Esophagus muscularis mucosa (tissue), 4 donors: ENCODE measurements at regions of chr3 and their contacts with region 1.

Region 1: GRCh38 chr3:15205934-15206661 is at the start of gene CAPN7:
- DNase-seq: peak; percentile 96
- H3K4me3 ChIP-seq: peak within 1 kb of the TSS; percentile 87 to 98 (median 90)
- H3K27ac ChIP-seq: peak within 1 kb of the TSS; percentile 96 to 99 (median 98)
- H3K4me1 ChIP-seq: peaks cover 24 to 52% (median 40%) of the 10 kb centered on the region in 4 donors
- H3K27me3 ChIP-seq: no peaks in the 10 kb centered on the region
- CTCF ChIP-seq: peak; percentile 44 to 60 (median 47)
- EP300 ChIP-seq: no peak
- POLR2A ChIP-seq: peak; percentile 65
- total RNA-seq, gene CAPN7: 33.0 to 52.0 (median 43.3) TPM

Region 2: GRCh38 chr3:15108082-15108545 is 98.0 kb before region 1 on chr3:
- intact Hi-C with region 1: loop called (anchors 2 kb)
- DNase-seq: no peak
- H3K4me3 ChIP-seq: no peak overlapping the region
- H3K27ac ChIP-seq: no peak overlapping the region
- H3K4me1 ChIP-seq: peaks cover 9 to 13% (median 11%) of the 10 kb centered on the region in 4 donors
- H3K27me3 ChIP-seq: no peaks in the 10 kb centered on the region
- CTCF ChIP-seq: peak; percentile 80 to 92 (median 82)
- EP300 ChIP-seq: no peak
- POLR2A ChIP-seq: no peak

Region 3: DNA sequence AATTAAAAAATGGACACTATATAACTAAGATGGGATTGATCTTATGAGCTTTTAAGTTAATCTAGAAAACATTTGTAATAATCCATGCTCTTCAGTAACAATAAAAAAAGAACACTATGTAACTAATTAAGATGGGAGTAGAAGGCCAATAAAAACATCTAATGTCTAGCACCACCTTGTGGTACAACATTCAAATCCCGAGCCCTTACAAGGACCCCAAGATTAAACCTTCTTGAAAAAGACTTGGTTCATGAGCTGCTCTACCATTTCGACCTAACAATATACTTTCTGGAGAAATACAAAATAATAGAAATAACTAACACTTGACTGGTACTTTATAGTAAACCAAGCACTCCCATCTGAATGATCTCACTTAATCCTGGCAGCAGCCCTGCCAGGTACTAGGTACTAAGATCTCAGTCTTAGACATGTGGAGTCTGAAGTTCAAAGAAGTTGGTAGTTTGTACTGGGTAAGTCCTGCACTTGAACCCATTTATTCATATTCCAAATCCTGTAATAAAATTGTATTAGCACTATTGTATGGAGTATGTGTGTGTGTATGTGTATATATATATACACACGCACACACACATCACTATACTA is 199.5 kb after region 1 on chr3:
- intact Hi-C with region 1: loop called (anchors 5 kb)
- DNase-seq: no peak
- H3K4me3 ChIP-seq: no peak overlapping the region
- H3K27ac ChIP-seq: no peak overlapping the region
- H3K4me1 ChIP-seq: peaks cover 0 to 3% (median 0%) of the 10 kb centered on the region in 4 donors
- H3K27me3 ChIP-seq: no peaks in the 10 kb centered on the region
- CTCF ChIP-seq: peak; percentile 43 to 61 (median 53)
- EP300 ChIP-seq: no peak
- POLR2A ChIP-seq: no peak

Region 4: GRCh38 chr3:15557511-15557946 is 351.4 kb after region 1 on chr3:
- intact Hi-C with region 1: loop called (anchors 5 kb)
- DNase-seq: peak; percentile 90
- H3K4me3 ChIP-seq: no peak overlapping the region
- H3K27ac ChIP-seq: no peak overlapping the region
- H3K4me1 ChIP-seq: peaks cover 0 to 9% (median 0%) of the 10 kb centered on the region in 4 donors
- H3K27me3 ChIP-seq: no peaks in the 10 kb centered on the region
- CTCF ChIP-seq: peak; percentile 59 to 70 (median 61)
- EP300 ChIP-seq: no peak
- POLR2A ChIP-seq: no peak